CD8-positive, alpha-beta memory T cell (primary cell): ENCODE measurements at regions of chr2 and their contacts with region 1.

Region 1: GRCh38 chr2:219253753-219254590 is at the start of gene TUBA4A:
- DNase-seq: peak; percentile 88 to 95 (median 90)
- H3K4me3 ChIP-seq: peak within 1 kb of the TSS; percentile 99
- H3K4me3 Mint-ChIP-seq: peak within 1 kb of the TSS; percentile 84 to 99 (median 89)
- H3K27ac ChIP-seq: peak within 1 kb of the TSS; percentile 95
- H3K27ac Mint-ChIP-seq: peak within 1 kb of the TSS; percentile 91 to 100 (median 96)
- H3K4me1 ChIP-seq: peaks cover 37% of the 10 kb centered on the region
- H3K4me1 Mint-ChIP-seq: peaks cover 45 to 50% (median 45%) of the 10 kb centered on the region in 3 donors
- H3K27me3 ChIP-seq: no peaks in the 10 kb centered on the region
- H3K27me3 Mint-ChIP-seq: no peaks in the 10 kb centered on the region
- total RNA-seq, gene TUBA4A: 175 to 178 TPM

Region 2: GRCh38 chr2:219177552-219178376 is 76.2 kb before region 1 on chr2 and contains the start of gene RETREG2:
- CTCF ChIA-PET with region 1: interaction called, 4 read pairs
- POLR2A ChIA-PET with region 1: interaction called, 35 read pairs
- DNase-seq: peak; percentile 73 to 90 (median 85)
- H3K4me3 ChIP-seq: peak within 1 kb of the TSS; percentile 64
- H3K4me3 Mint-ChIP-seq: peak within 1 kb of the TSS; percentile 94 to 98 (median 96)
- H3K27ac ChIP-seq: peak within 1 kb of the TSS; percentile 85
- H3K27ac Mint-ChIP-seq: peak within 1 kb of the TSS; percentile 95 to 100 (median 99)
- H3K4me1 ChIP-seq: peaks cover 54% of the 10 kb centered on the region
- H3K4me1 Mint-ChIP-seq: peaks cover 55 to 79% (median 75%) of the 10 kb centered on the region in 3 donors
- H3K27me3 ChIP-seq: no peaks in the 10 kb centered on the region
- H3K27me3 Mint-ChIP-seq: no peaks in the 10 kb centered on the region
- total RNA-seq, gene RETREG2: 67.6 to 76.1 TPM